CD8-positive, alpha-beta T cell (primary cell): ENCODE measurements at regions of chr2 and their contacts with region 1.

Region 1: GRCh38 chr2:25794544-25795276 is 83.6 kb downstream of the ASXL2 start:
- DNase-seq: peak in 2 of 9 experiments; percentile 39 to 66
- ATAC-seq: peak; percentile 70
- H3K4me3 ChIP-seq: peak overlapping the region; percentile 39 to 45
- H3K4me3 Mint-ChIP-seq: peak overlapping the region; percentile 86
- H3K27ac ChIP-seq: peak overlapping the region; percentile 36 to 87
- H3K27ac Mint-ChIP-seq: peak overlapping the region; percentile 96
- H3K4me1 ChIP-seq: peaks cover 54% of the 10 kb centered on the region
- H3K4me1 Mint-ChIP-seq: peaks cover 84% of the 10 kb centered on the region
- H3K27me3 ChIP-seq: no peaks in the 10 kb centered on the region
- H3K27me3 Mint-ChIP-seq: no peaks in the 10 kb centered on the region
- CTCF ChIP-seq: no peak

Region 2: GRCh38 chr2:25825238-25825637 is 30.5 kb after region 1 on chr2:
- CTCF ChIA-PET with region 1: interaction called, 3 read pairs
- POLR2A ChIA-PET with region 1: no interaction called
- intact Hi-C with region 1: loop called in 1 of 2 experiments (anchors 1 kb)
- DNase-seq: peak in 7 of 9 experiments; percentile 14 to 74 (median 45)
- ATAC-seq: peak; percentile 83
- H3K4me3 ChIP-seq: no peak overlapping the region
- H3K4me3 Mint-ChIP-seq: peak overlapping the region; percentile 33
- H3K27ac ChIP-seq: no peak overlapping the region
- H3K27ac Mint-ChIP-seq: peak overlapping the region; percentile 74
- H3K4me1 ChIP-seq: peaks cover 36% of the 10 kb centered on the region
- H3K4me1 Mint-ChIP-seq: peaks cover 68% of the 10 kb centered on the region
- H3K27me3 ChIP-seq: no peaks in the 10 kb centered on the region
- H3K27me3 Mint-ChIP-seq: no peaks in the 10 kb centered on the region
- CTCF ChIP-seq: no peak